ENCODE measurements at regions of chr20 and their contacts with region 1.

Region 1: GRCh38 chr20:63635431-63636141 is 8.7 kb upstream of the GMEB2 start:
- DNase-seq: no peak

Region 2: DNA sequence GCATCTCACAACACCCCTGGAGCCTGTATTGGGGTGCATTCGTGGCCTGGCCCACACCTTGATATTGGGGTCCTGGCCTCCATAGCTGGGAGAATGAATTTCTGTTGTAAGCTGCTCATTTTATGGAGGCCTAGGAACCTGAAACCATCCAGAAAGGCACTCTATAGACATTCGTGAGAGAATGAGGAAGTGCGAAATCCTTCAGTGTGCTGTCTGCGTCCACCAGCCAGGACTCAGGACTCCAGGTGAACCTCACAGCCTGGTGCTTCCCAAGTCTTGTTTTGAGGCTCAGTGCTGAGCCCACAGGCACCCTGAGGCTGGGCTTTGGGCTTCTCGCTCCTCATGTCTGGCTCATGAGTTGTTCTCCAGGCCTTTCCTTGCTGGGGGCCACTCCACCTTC is 1196.4 kb before region 1 on chr20:
- intact Hi-C with region 1: no loop called
- DNase-seq: no peak

Region 3: DNA sequence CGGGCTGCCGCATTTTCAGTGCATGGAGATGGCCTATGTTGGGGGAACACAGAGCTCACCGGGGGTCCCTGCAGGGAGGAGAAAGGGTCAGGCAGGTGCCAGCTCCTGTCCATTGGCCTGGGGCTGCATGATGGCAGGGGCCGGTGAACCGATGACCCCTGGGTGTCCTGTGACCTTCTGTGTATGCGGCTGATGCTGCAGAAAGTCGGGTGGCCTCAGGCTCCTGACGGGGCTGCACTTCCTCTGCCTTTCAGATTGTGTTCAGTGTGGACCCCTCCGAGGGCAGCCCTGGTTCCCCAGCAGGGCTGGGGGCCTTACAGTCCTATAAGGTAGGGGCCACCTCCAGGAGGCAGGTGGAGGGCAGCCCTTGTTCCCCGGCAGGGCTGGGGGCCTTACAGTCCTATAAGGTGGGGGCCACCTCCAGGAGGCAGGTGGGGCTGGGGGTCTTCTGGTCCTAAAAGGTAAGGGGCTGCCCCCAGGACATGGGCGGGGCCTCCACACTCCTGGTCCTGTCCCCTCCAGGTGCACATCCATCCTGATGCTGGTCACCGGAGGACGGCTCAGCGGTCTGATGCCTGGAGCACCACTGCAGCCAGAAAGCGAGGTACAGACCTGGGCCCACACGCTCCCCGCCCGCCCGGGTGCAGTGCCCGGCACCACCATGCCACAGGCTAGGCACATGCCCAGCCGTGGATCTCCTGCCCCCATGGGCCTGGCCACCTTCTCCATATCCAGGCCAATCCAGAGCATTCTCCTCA is 49.9 kb after region 1 on chr20:
- intact Hi-C with region 1: loop called in 1 of 2 experiments (anchors 1 kb)
- DNase-seq: no peak

Region 4: DNA sequence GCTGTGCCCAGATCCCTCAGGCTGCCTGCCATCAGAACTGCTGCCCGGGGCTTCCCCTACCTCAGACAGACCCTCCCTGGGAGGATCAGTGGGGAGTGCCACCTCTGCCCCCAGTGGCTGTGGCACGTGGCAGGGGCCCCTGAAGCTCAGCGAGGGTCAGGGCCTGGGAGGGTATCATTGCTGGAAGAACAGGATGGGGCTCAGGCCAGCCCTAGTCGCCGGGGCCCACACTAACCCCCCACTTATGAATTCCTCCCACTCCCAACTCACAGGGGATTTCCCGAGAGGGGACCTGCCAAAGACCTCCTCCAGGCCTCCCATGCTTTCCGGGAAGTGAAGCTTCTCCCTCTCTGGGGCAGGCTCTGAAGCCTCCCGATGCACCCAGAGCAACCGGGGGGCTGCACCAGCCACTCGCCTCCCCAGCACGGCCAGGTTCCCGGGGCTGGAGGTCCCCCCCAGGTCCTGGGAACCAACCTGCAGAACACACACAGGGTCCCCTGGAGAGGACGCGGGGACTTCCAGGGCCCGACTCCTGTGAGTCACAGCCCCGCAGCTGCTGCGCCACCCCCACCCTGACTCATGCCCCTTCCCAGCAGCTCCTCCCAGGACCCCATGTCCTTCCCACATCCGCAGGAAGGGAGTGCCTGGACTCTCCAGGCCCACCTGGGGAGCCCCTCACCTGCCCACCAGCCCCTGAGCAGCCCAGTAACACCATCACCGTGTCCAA is 63.3 kb after region 1 on chr20:
- intact Hi-C with region 1: no loop called
- DNase-seq: peak; percentile 94

Measured in posterior vena cava (tissue), 2 donors.